ENCODE measurements at regions of chr14 and their contacts with region 1.

Region 1: GRCh38 chr14:52552063-52552988 is at the starts of genes GPR137C and TXNDC16:
- DNase-seq: peak; percentile 99
- H3K4me3 Mint-ChIP-seq: peak within 1 kb of the TSS; percentile 90
- H3K27ac Mint-ChIP-seq: peak within 1 kb of the TSS; percentile 77
- H3K4me1 Mint-ChIP-seq: peaks cover 24% of the 10 kb centered on the region
- H3K27me3 Mint-ChIP-seq: peaks cover 28% of the 10 kb centered on the region
- total RNA-seq, gene GPR137C: 0.07 and 0.27 TPM in 2 replicates
- total RNA-seq, gene TXNDC16: 4.7 and 5.2 TPM in 2 replicates

Region 2: GRCh38 chr14:52313903-52314594 is 238.3 kb before region 1 on chr14 and contains the start of gene PTGER2:
- intact Hi-C with region 1: loop called (anchors 5 kb)
- DNase-seq: peak; percentile 87
- H3K4me3 Mint-ChIP-seq: peak within 1 kb of the TSS; percentile 100
- H3K27ac Mint-ChIP-seq: peak within 1 kb of the TSS; percentile 98
- H3K4me1 Mint-ChIP-seq: peaks cover 59% of the 10 kb centered on the region
- H3K27me3 Mint-ChIP-seq: no peaks in the 10 kb centered on the region
- total RNA-seq, gene PTGER2: 53.3 and 54.1 TPM in 2 replicates

Region 3: DNA sequence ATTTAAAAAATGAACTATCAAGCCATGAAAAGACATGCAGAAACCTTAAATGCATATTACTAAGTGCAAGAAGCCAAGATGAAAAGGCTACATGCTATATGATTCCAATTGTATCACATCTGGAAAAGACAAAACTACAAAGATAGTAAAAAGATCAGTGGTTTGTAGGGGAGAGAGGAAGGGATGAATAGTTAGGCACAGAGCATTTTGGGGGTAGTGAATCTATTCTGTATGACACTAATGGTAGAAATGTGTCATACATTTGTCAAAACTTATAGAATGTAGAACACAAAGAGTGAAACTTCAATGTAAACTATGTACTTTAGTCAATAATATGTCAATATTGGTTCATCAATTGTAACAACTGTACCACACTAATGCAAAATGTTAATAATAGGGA is 20.8 kb before region 1 on chr14:
- intact Hi-C with region 1: loop called (anchors 2 kb)
- DNase-seq: no peak
- H3K4me3 Mint-ChIP-seq: no peak overlapping the region
- H3K27ac Mint-ChIP-seq: no peak overlapping the region
- H3K4me1 Mint-ChIP-seq: no peaks in the 10 kb centered on the region
- H3K27me3 Mint-ChIP-seq: no peaks in the 10 kb centered on the region

Region 4: DNA sequence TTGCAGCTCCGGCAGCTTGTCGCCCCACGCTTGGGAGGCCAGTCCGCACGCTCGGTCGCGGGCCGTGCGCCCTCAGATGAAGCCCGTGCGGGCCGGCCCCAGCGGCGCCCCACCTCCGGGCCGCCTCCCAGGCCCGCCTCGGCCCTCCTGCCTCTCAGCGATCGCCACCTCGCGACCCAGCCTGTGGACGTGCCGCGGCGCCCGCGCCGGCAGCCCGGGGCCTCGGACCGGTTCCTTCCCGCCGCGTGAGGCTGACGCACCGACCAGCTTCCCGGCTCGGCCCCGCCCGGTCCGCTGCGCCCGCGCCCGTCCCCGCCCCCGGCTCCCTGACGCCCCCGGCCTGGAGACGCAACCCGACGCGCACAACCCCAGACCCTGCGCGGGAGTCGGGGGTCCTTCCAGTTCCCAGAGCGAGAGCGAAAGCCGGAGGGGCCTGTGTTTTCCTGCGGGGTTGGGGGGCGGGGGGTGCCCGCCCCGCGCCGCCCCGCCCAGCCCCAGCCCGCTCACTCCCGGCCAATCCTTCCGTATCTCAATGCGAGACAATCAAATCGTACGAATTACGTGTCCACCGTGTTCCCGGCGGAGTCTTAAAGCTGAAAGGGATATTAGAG is 143.3 kb after region 1 on chr14 and contains the start of gene ERO1A:
- intact Hi-C with region 1: loop called (anchors 5 kb)
- DNase-seq: peak; percentile 65
- H3K4me3 Mint-ChIP-seq: peak within 1 kb of the TSS; percentile 98
- H3K27ac Mint-ChIP-seq: peak within 1 kb of the TSS; percentile 99
- H3K4me1 Mint-ChIP-seq: peaks cover 29% of the 10 kb centered on the region
- H3K27me3 Mint-ChIP-seq: no peaks in the 10 kb centered on the region
- total RNA-seq, gene ERO1A: 219 and 226 TPM in 2 replicates

Region 5: DNA sequence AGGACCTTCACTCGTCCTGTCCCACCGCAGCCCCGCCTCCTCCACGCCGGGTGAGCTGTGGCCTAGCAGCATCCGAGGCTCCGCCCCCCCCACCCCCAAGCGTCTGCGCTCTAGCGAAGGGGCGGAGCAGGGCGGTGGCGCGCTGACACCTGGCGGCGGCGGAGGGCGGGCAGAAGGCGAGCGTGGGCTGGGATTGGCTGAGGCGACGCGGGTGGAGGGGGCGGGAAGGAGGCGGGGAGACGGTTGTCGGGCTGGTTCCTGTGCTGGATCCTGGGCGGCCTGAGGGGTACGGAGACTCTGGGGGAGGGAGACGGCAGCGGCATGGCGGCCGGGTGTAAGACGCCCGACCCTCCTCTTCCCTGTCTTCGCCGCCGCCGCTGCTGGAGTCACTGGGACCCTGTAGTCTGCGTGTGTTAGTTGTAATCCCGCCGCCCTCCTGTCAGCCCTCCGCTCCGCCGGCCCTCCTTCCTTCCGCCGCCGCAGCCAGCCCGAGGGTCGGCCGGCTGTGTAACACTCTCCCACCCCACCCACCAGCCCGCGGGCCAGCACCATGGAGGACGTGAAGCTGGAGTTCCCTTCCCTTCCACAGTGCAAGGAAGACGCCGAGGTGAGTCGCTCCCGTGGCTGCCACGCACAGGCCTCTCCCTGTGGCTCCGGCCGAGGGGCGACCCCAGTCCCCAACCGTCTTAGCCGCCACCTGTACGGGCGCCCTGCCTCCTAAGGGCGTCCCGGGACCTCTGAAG is 177.8 kb after region 1 on chr14 and contains the start of gene STYX:
- intact Hi-C with region 1: loop called (anchors 5 kb)
- DNase-seq: peak; percentile 96
- H3K4me3 Mint-ChIP-seq: peak within 1 kb of the TSS; percentile 95
- H3K27ac Mint-ChIP-seq: peak within 1 kb of the TSS; percentile 80
- H3K4me1 Mint-ChIP-seq: peaks cover 18% of the 10 kb centered on the region
- H3K27me3 Mint-ChIP-seq: no peaks in the 10 kb centered on the region
- total RNA-seq, gene STYX: 16.3 and 16.5 TPM in 2 replicates

Region 6: DNA sequence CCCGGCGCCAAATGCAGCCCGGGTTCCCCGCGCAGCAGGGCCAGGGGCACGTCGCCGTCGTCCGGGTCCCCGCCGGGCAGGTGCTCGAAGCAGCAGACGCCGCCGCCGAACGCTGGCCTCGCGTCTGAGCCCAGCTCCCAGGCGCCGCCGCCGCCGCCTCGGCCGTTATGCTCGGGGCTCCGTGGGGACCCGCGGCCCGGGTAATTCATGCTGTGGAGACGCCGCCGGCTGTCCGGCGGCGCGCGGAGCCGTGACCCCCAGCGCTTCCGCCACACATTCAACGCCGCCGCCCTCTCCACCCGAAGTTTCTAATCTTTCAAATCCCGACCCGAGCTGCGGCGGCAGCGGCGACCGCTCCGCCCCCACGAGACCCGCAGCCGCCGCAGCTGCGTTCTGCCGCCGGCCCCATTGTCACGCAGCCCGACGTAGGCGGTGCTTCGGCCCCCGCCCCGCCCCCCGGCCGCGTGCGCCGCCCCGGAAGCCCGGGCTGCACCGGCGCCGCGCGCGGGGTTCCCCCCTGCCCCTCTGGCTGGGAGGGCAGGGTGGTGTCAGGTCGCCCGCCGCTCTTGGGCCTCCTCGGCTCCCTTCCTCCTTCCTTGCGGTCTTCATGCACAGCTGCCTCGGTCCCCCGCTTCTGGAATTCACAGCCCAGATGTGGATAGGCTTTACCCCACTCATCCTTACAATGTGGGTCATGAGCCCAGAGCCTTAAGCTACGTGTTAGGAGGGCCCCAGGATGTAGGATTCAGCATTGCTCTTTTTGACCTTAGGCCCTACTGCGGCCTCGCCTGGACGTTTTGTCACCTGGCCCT is 600.8 kb after region 1 on chr14 and contains the start of gene DDHD1:
- intact Hi-C with region 1: loop called (anchors 2 kb)
- DNase-seq: peak; percentile 82
- H3K4me3 Mint-ChIP-seq: peak within 1 kb of the TSS; percentile 99
- H3K27ac Mint-ChIP-seq: peak within 1 kb of the TSS; percentile 100
- H3K4me1 Mint-ChIP-seq: peaks cover 45% of the 10 kb centered on the region
- H3K27me3 Mint-ChIP-seq: no peaks in the 10 kb centered on the region
- total RNA-seq, gene DDHD1: 53.7 and 54.6 TPM in 2 replicates